Gastrocnemius medialis (tissue), 4 donors: ENCODE measurements at regions of chr20 and their contacts with region 1.

Region 1: GRCh38 chr20:43590392-43591323 is at the start of gene IFT52:
- DNase-seq: peak; percentile 84 to 88
- ATAC-seq: peak; percentile 99
- H3K4me3 ChIP-seq: peak within 1 kb of the TSS; percentile 92 to 97 (median 96)
- H3K27ac ChIP-seq: peak within 1 kb of the TSS; percentile 78 to 93 (median 86)
- H3K4me1 ChIP-seq: peaks cover 12 to 16% of the 10 kb centered on the region in 2 donors
- H3K27me3 ChIP-seq: no peaks in the 10 kb centered on the region
- CTCF ChIP-seq: no peak
- POLR2A ChIP-seq: peak in 1 of 2 donors; percentile 6
- total RNA-seq, gene IFT52: 1.7 to 3.4 (median 2.9) TPM

Region 2: GRCh38 chr20:43456809-43457639 is 133.6 kb before region 1 on chr20:
- in situ Hi-C with region 1: no loop called
- intact Hi-C with region 1: loop called (anchors 1 kb)
- DNase-seq: peak; percentile 89 to 90
- ATAC-seq: peak; percentile 96 to 98
- H3K4me3 ChIP-seq: peak overlapping the region; percentile 88 to 97 (median 96)
- H3K27ac ChIP-seq: peak overlapping the region; percentile 99 to 100 (median 100)
- H3K4me1 ChIP-seq: peaks cover 11 to 25% of the 10 kb centered on the region in 2 donors
- H3K27me3 ChIP-seq: no peaks in the 10 kb centered on the region
- CTCF ChIP-seq: no peak
- POLR2A ChIP-seq: no peak

Region 3: DNA sequence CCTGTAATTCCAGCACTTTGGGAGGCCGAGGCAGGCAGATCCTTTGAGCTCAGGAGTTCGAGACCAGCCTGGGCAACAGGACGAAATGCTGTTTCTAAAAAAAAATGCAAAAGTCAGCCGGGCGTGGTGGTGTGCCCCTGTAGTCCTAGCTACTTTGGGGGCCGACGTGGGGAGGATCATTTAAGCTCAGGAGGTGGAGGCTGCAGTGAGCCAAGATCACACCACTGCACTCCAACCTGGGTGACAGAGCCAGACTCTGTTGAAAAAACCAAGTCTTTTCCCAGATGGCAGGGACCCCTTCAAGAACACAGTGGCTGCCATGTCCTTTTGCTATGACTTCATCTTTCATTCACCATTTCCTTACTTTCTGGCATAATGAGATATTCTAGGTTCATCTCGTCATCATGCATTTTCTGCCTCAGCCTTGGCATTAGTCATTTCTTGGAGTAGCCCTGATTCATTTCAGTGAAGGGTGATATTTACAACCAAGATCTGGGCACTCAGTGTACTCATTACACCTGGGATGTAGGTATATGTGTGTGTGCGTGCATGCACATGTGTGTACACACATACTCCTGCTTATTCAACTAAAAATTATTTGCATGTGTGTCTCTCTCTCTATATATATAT is 262.6 kb after region 1 on chr20:
- in situ Hi-C with region 1: no loop called
- intact Hi-C with region 1: no loop called
- DNase-seq: no peak
- ATAC-seq: no peak
- H3K4me3 ChIP-seq: no peak overlapping the region
- H3K27ac ChIP-seq: no peak overlapping the region
- H3K4me1 ChIP-seq: no peaks in the 10 kb centered on the region
- H3K27me3 ChIP-seq: no peaks in the 10 kb centered on the region
- CTCF ChIP-seq: no peak
- POLR2A ChIP-seq: no peak